HepG2 (cell line): ENCODE measurements at regions of chr12 and their contacts with region 1.

Region 1: GRCh38 chr12:109573029-109573913 is at the starts of genes MMAB and MVK:
- DNase-seq: peak; percentile 99
- ATAC-seq: peak; percentile 95
- H3K4me3 ChIP-seq: peak within 1 kb of the TSS; percentile 57 to 79 (median 69)
- H3K27ac ChIP-seq: peak within 1 kb of the TSS; percentile 83
- H3K4me1 ChIP-seq: peaks cover 70% of the 10 kb centered on the region
- H3K27me3 ChIP-seq: no peaks in the 10 kb centered on the region
- CTCF ChIP-seq: no peak
- EP300 ChIP-seq: peak; percentile 49 to 52; a peak in 2 of 4 replicates
- POLR2A ChIP-seq: peak; percentile 84 to 86
- RAD21 ChIP-seq: peak; percentile 56
- total RNA-seq, gene MMAB: 77.3 and 112 TPM in 2 replicates
- total RNA-seq, gene MVK: 47.1 and 66.9 TPM in 2 replicates

Region 2: DNA sequence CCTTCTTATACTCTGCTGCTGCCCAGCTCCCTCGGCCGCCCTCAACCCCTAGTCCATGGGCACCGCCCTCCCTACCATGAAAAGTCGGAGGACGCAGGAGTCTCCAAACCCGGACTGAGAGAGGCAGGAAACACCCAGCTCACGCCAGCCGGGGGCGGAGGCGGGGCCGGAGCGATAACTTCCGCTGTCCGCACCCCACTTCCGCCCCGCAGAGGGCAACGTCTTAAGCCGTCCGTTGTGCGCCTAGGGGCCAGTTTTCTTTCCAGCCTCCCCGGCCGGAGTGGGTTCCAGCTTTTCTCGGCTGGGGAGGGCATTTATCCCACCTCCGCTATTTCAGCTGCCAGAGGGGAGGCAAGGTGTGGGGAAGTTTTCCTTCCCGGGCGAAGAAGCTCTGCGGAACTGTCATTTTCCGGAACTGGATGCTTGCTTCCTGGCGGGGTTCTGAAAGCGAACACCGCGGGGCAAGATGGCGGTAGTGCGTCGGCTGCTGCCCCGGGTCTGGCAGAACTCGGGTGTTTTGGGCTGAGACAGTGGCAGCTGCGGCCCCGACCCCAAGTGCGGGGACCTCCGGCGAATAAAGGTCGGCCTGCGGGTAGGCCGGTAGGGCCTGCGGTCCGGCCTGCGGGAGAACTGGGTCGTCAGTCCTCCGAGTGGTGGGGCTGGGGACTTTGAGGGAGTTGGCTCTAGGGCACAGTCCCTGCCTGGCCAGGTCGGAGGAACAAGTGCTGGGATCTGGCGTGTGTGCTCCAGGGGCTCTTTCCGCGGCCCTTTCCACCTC is 95.9 kb before region 1 on chr12 and contains the starts of genes KCTD10 and UBE3B:
- CTCF ChIA-PET with region 1: no interaction called
- POLR2A ChIA-PET with region 1: no interaction called
- in situ Hi-C with region 1: no loop called
- intact Hi-C with region 1: no loop called
- DNase-seq: peak; percentile 72
- ATAC-seq: peak; percentile 96
- H3K4me3 ChIP-seq: peak within 1 kb of the TSS; percentile 95 to 98 (median 95)
- H3K27ac ChIP-seq: peak within 1 kb of the TSS; percentile 94
- H3K4me1 ChIP-seq: peaks cover 39% of the 10 kb centered on the region
- H3K27me3 ChIP-seq: no peaks in the 10 kb centered on the region; a peak in 1 of 5 replicates
- CTCF ChIP-seq: peak; percentile 12; the same call in 1 of the 2 replicates
- EP300 ChIP-seq: no peak
- POLR2A ChIP-seq: peak; percentile 67 to 71
- RAD21 ChIP-seq: no peak
- total RNA-seq, gene KCTD10: 6.9 and 12.5 TPM in 2 replicates
- total RNA-seq, gene UBE3B: 25.3 and 31.5 TPM in 2 replicates

Region 3: DNA sequence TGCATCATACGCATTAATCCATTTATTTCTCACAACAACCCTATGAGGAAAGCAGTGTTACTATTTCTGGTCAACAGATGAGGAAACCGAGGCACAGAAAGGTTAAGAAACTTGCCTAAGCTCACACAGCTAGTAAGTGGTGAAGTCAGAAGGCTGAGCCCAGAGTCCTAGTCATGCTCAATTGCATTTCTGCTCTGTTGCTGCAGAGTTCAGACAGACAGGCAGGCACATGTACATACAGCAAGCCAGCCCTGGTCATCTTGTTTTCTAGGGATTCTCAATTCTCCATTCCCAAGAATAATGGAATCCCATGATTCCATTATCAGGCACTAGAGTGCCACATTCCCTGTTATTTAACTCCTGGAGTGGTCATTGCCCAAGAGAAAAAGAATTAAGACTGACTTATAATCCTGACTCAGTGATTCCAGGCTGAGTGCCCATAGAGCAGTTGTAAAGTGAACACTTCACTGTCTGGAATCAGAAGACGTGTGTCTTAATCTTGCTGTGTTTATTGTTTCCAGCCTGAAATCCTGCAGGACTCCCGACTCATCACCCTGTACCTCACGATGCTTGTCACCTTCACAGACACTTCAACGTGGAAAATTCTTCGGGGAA is 85.1 kb before region 1 on chr12:
- CTCF ChIA-PET with region 1: no interaction called
- POLR2A ChIA-PET with region 1: no interaction called
- in situ Hi-C with region 1: no loop called
- intact Hi-C with region 1: no loop called
- DNase-seq: no peak
- ATAC-seq: no peak
- H3K4me3 ChIP-seq: no peak overlapping the region
- H3K27ac ChIP-seq: no peak overlapping the region
- H3K4me1 ChIP-seq: peaks cover 4% of the 10 kb centered on the region
- H3K27me3 ChIP-seq: no peaks in the 10 kb centered on the region
- CTCF ChIP-seq: no peak
- EP300 ChIP-seq: no peak
- POLR2A ChIP-seq: no peak
- RAD21 ChIP-seq: no peak

Region 4: GRCh38 chr12:109553483-109553882 is 19.8 kb before region 1 on chr12:
- CTCF ChIA-PET with region 1: no interaction called
- POLR2A ChIA-PET with region 1: interaction called, 18 read pairs
- in situ Hi-C with region 1: no loop called
- intact Hi-C with region 1: no loop called
- DNase-seq: no peak
- ATAC-seq: peak; percentile 5
- H3K4me3 ChIP-seq: no peak overlapping the region
- H3K27ac ChIP-seq: no peak overlapping the region
- H3K4me1 ChIP-seq: peaks cover 67% of the 10 kb centered on the region
- H3K27me3 ChIP-seq: peaks cover 4 to 34% of the 10 kb centered on the region in 2 experiments
- CTCF ChIP-seq: no peak
- EP300 ChIP-seq: no peak
- POLR2A ChIP-seq: no peak; a peak in 1 of 4 replicates
- RAD21 ChIP-seq: no peak

Region 5: GRCh38 chr12:109586385-109587296 is 13.4 kb after region 1 on chr12:
- CTCF ChIA-PET with region 1: no interaction called
- POLR2A ChIA-PET with region 1: interaction called, 31 read pairs
- in situ Hi-C with region 1: no loop called
- intact Hi-C with region 1: no loop called
- DNase-seq: peak; percentile 82
- ATAC-seq: peak; percentile 58
- H3K4me3 ChIP-seq: peak overlapping the region in 1 of 3 experiments; percentile 30; a peak in 1 of 6 replicates
- H3K27ac ChIP-seq: peak overlapping the region; percentile 83
- H3K4me1 ChIP-seq: peaks cover 55% of the 10 kb centered on the region
- H3K27me3 ChIP-seq: no peaks in the 10 kb centered on the region
- CTCF ChIP-seq: no peak
- EP300 ChIP-seq: peak in 1 of 2 experiments; percentile 37; a peak in 1 of 4 replicates
- POLR2A ChIP-seq: no peak
- RAD21 ChIP-seq: no peak; the same call in 1 of the 2 replicates